ENCODE measurements at regions of chr17 and their contacts with region 1.

Region 1: DNA sequence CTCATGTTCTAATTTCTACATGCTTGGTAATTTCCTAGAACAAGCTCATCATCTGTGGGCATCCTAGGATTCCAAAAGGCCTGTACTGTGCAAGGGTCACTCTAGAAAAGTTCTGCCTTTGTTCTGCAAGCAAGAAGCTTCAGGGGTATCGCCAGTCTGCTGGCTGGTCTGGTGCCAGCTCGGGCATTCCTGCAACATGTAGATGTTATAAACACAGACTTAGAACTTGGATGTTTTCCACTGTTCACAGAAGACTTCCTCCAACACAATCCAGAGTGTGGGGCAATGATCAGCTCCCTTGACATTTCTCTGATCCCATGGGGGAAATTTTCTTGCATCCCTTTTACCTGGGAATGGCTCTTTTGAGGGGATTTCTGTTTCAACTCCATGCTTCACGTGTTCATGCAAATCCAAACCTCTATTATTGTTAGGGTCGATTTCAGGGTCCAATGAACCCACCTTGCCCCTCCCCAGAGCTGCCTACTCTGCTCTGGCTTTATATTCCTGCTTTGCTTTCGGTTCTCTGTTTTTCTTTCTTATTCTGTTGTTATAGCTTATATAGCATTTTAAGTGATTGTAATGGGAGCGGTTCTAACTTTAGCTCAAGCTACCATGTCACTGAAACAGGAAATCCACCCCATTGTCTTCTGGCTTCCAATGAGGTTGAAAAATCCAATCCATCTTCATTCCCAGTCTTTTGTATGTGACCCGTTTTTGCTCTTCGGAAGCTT is 25.3 kb downstream of the UBE2O start:
- DNase-seq: peak; percentile 87
- ATAC-seq: peak; percentile 87
- H3K4me3 ChIP-seq: peak overlapping the region; percentile 6 to 49 (median 15)
- H3K4me3 Mint-ChIP-seq: peak overlapping the region; percentile 54
- H3K27ac ChIP-seq: peak overlapping the region; percentile 75 to 92
- H3K27ac Mint-ChIP-seq: peak overlapping the region; percentile 93
- H3K4me1 ChIP-seq: peaks cover 78 to 96% of the 10 kb centered on the region in 2 donors
- H3K4me1 Mint-ChIP-seq: peaks cover 73% of the 10 kb centered on the region
- H3K27me3 ChIP-seq: no peaks in the 10 kb centered on the region
- H3K27me3 Mint-ChIP-seq: no peaks in the 10 kb centered on the region
- CTCF ChIP-seq: no peak

Region 2: DNA sequence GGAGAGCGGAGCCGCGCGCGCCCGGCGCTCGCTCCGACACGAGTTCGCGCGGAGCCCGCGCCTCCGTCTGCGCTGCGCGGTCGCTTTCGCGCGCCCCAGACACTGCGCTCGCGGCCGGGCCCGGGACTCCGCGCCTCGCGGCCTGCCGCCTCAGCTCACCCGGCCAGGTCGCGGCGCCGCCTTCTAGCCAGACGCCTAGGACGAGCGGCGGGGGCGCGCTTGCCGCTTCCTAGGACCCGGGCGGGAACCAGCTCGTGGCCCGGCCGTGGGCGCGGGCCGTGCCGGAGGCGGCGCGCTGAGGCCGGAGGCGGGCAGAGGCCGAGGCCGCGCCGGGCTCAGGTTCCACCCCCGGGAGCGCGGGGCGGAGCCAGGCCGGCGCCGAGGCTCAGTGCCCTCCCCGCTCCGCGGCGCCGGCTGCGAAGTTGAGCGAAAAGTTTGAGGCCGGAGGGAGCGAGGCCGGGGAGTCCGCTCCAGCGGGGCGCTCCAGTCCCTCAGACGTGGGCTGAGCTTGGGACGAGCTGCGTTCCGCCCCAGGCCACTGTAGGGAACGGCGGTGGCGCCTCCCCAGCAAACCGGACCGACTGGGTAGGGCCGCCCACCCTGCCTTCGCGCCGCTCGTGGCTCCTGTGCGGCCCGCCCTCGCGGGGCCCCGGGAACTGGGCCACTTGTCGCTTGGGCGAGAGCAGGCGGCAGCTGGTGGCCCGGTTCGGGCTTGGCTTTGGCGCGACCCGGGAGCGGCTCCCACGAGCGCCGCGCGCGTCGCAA is 43.3 kb before region 1 on chr17 and contains the start of gene SPHK1:
- CTCF ChIA-PET with region 1: interaction called, 4 read pairs
- POLR2A ChIA-PET with region 1: interaction called, 12 read pairs
- intact Hi-C with region 1: no loop called
- DNase-seq: peak; percentile 81
- ATAC-seq: peak; percentile 76
- H3K4me3 ChIP-seq: peak within 1 kb of the TSS; percentile 40 to 71 (median 58)
- H3K4me3 Mint-ChIP-seq: peak within 1 kb of the TSS; percentile 84
- H3K27ac ChIP-seq: no peak within 1 kb of the TSS
- H3K27ac Mint-ChIP-seq: peak within 1 kb of the TSS; percentile 78
- H3K4me1 ChIP-seq: peaks cover 26 to 29% of the 10 kb centered on the region in 2 donors
- H3K4me1 Mint-ChIP-seq: peaks cover 17% of the 10 kb centered on the region
- H3K27me3 ChIP-seq: peaks cover 0 to 24% (median 8%) of the 10 kb centered on the region in 4 experiments
- H3K27me3 Mint-ChIP-seq: peaks cover 7% of the 10 kb centered on the region
- CTCF ChIP-seq: no peak
- total RNA-seq, gene SPHK1: 2.2 and 2.4 TPM in 2 replicates

Region 3: DNA sequence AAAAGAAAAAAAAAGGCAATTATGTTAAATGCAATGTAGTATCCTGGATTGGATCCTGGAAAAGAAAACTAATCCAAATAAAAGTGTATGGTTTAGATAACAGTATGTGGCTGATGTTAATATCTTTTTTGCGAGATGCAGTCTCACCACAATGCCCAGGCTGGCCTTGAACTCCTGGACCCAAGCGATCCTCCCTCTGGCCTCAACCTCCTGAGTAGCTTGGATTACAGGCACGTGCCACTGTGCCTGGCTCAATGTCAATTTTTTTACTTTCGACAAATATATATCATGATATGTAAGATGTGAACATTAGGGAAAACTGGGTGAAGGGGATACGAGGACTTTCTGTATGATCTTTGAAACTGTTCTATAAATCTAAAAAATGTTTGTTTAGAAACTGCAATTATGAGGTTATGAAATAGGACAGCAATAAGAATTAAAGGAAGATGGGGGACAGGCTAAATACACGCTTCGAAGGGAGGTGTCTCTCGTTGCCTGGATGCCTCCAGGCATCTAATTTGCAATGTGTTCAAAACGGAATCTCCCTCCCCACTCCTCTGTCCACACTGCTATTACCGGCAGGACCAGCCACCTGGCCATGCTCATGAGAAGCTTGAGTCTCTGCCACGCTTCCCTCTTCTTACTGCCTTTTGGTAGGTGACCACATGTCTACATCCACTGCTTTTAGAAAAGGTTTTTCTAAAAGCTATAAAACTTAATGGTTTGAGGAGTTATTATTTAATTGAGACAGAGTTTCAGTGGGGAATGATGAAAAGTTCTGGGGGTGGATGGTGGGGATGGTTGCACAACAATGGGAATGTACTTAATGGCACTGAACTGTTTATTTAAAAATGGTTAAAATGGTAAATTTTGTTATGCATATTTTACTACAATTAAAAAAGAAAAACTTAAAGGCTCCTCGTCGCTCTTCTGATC is 10.1 kb after region 1 on chr17:
- CTCF ChIA-PET with region 1: interaction called, 10 read pairs
- POLR2A ChIA-PET with region 1: no interaction called
- intact Hi-C with region 1: no loop called
- DNase-seq: no peak
- ATAC-seq: no peak
- H3K4me3 ChIP-seq: no peak overlapping the region
- H3K4me3 Mint-ChIP-seq: no peak overlapping the region
- H3K27ac ChIP-seq: no peak overlapping the region
- H3K27ac Mint-ChIP-seq: no peak overlapping the region
- H3K4me1 ChIP-seq: peaks cover 50 to 52% of the 10 kb centered on the region in 2 donors
- H3K4me1 Mint-ChIP-seq: peaks cover 74% of the 10 kb centered on the region
- H3K27me3 ChIP-seq: no peaks in the 10 kb centered on the region
- H3K27me3 Mint-ChIP-seq: no peaks in the 10 kb centered on the region
- CTCF ChIP-seq: no peak

Region 4: GRCh38 chr17:76452660-76453430 is 25.2 kb after region 1 on chr17 and contains the start of gene UBE2O:
- CTCF ChIA-PET with region 1: interaction called, 39 read pairs
- POLR2A ChIA-PET with region 1: interaction called, 10 read pairs
- intact Hi-C with region 1: loop called (anchors 1 kb)
- DNase-seq: peak; percentile 95
- ATAC-seq: peak; percentile 93
- H3K4me3 ChIP-seq: peak within 1 kb of the TSS; percentile 46 to 91 (median 72)
- H3K4me3 Mint-ChIP-seq: peak within 1 kb of the TSS; percentile 88
- H3K27ac ChIP-seq: peak within 1 kb of the TSS; percentile 46 to 77
- H3K27ac Mint-ChIP-seq: peak within 1 kb of the TSS; percentile 88
- H3K4me1 ChIP-seq: peaks cover 22 to 26% of the 10 kb centered on the region in 2 donors
- H3K4me1 Mint-ChIP-seq: peaks cover 37% of the 10 kb centered on the region
- H3K27me3 ChIP-seq: no peaks in the 10 kb centered on the region
- H3K27me3 Mint-ChIP-seq: no peaks in the 10 kb centered on the region
- CTCF ChIP-seq: peak; percentile 62
- total RNA-seq, gene UBE2O: 54.0 and 62.4 TPM in 2 replicates

Measured in B cell (primary cell).